GM10248 (cell line): ENCODE measurements at regions of chr5 and their contacts with region 1.

Region 1: DNA sequence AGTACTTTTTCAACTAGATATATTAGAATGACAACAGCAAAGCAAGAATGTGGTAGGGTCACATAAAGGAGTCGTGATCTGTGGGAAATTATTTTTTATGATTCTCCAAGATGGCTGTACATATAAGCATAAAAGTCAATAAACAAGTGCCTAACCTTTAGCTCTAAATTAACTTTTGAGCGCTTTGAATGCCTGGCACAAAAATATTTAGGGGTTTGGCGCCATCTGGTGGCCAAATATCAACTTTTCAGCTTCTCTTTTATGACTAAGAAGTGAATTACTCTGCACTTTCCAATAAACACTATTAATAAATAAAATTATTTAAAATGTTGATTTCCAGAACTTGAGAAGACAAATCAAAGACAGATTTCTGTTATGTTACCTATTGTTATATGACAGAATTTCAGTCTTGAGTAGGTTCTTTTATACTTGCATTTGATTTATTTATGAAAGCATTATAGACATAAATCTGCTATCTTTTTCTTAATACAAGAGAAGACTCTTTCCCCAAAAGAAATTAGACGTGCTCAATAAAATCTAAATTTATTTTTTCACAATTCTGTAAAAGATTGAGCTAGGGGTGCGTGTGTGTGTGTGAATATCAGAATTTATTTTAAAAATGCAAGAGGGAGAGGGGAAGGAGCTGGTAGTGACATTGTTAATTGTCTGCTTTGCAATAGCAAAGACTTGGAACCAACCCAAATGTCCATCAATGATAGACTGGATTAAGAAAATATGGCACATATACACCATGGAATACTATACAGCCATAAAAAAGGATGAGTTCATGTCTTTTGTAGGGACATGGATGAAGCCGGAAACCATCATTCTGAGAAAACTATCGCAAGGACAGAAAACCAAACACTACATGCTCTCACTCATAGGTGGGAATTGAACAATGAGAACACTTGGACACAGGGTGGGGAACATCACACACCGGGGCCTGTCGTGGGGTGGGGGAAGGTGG is 36.7 kb upstream of the ARRDC3 start:
- DNase-seq: peak; percentile 27
- CTCF ChIP-seq: peak; percentile 55

Region 2: DNA sequence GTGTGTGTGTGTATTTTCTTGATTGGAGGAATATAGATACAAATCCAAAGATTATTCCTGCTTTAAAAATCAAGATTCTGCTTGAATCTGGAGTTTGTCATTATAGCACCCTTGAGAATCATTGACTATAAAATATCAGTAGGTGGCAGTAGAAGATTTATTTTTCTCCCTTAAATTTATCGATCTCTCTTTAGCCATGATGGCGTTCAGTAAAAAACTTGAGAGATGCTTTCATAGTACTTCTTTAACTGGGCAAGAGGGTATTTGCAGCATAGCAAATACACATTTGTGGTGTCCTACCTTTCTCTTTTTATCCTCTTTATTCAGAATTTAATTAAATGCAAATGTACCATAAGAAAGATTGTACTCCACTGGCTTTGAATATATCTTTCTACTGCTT is 553.5 kb before region 1 on chr5:
- CTCF ChIA-PET with region 1: interaction called, 43 read pairs
- POLR2A ChIA-PET with region 1: no interaction called
- DNase-seq: peak; percentile 23
- CTCF ChIP-seq: peak; percentile 23

Region 3: DNA sequence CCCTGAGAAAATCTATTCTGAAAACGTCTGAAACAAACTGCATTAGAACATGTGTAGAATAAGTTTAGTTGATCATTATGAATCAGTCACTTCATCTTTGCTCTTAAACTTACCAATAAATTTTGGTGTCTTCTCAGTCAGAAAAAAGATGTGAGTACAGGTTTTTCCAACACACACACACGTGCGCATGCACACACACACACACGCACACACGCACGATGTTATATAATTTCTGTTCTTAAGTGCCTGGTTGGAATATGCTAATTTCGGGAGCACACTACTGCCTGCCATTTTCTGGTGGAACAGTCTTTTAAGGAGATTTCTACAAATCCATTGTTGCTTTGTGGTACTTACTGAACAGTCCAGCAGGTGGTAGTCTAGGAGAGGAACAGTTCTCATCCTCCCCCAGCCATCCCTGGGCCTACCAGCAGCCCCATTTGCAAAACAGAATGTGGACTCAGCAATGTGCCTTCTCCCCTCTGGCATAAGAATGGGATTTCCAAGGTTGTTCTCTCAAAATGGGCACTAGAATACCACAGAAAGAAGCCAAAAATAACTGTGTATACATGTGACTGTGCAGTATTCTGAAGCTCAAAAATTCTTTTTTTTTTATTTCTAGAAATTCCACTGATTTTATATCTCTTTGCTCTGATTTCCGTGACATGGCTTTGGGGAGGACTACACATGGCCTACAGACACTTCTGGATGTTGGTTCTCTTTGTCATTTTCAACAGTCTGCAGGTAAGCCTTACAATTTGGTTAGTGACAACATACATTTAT is 318.1 kb before region 1 on chr5:
- CTCF ChIA-PET with region 1: interaction called, 24 read pairs
- POLR2A ChIA-PET with region 1: no interaction called
- DNase-seq: peak; percentile 51
- CTCF ChIP-seq: peak; percentile 62

Region 4: DNA sequence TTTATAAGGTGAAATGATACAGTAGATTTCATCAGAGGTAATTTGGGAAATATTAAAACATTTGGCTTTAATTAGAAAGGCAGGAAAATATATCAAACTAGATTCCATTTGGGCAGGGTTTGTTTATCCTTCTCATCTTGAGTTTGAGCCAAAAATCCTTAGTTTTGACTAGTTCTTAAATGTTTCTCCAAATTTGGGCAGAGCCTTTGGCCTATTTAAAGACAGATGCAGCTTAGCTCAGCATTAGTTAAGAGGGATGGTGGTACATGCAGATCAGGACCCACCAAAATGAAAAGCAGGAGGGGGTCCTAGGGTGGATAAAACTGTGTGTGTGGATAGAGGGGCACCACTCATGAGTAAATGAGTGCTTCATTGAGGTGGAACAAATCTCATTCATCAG is 16.4 kb before region 1 on chr5:
- CTCF ChIA-PET with region 1: interaction called, 28 read pairs
- POLR2A ChIA-PET with region 1: no interaction called
- DNase-seq: no peak
- CTCF ChIP-seq: no peak

Region 5: GRCh38 chr5:91434348-91434747 is 14.5 kb after region 1 on chr5:
- CTCF ChIA-PET with region 1: interaction called, 35 read pairs
- POLR2A ChIA-PET with region 1: no interaction called
- DNase-seq: no peak
- CTCF ChIP-seq: no peak